MCF 10A (cell line): ENCODE measurements at regions of chr6 and their contacts with region 1.

Region 1: DNA sequence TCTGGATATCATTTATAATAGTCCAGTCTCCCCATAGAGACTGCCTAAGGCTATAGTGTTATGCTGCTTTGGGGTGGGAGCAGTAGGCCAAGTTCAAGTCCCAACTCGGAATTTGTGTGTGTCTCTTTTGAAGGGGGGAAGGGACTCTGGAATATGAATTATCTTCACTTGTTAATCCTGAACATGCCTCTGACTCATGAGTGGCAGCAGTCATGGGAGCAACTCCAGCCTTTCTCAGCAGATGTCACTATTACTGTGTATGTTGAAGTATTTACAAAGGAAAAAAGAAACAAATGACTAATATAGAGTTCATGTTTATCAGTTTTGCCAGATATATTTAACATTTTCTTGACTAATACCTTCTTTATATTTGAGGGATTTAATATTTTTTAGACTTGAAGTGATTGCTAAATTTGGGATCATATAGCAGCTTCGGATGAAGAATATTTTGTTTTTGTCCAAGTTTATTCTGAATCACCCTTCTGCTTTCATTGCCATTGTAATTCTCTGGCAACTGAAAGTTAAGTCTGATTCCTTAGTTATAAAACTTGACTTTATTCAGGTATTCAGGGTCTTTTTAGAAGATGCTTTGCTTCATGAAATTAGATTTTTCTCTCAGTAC is 23.4 kb downstream of the FAM217A start:
- DNase-seq: peak; percentile 80
- H3K4me3 Mint-ChIP-seq: no peak overlapping the region
- H3K27ac Mint-ChIP-seq: peak overlapping the region; percentile 44
- H3K4me1 Mint-ChIP-seq: peaks cover 26% of the 10 kb centered on the region
- H3K27me3 Mint-ChIP-seq: no peaks in the 10 kb centered on the region
- CTCF ChIP-seq: peak; percentile 68

Region 2: GRCh38 chr6:4125936-4126864 is 70.7 kb after region 1 on chr6:
- CTCF ChIA-PET with region 1: interaction called, 4 read pairs
- POLR2A ChIA-PET with region 1: interaction called, 4 read pairs
- intact Hi-C with region 1: loop called (anchors 2 kb)
- DNase-seq: peak; percentile 80
- H3K4me3 Mint-ChIP-seq: no peak overlapping the region
- H3K27ac Mint-ChIP-seq: no peak overlapping the region
- H3K4me1 Mint-ChIP-seq: peaks cover 11% of the 10 kb centered on the region
- H3K27me3 Mint-ChIP-seq: no peaks in the 10 kb centered on the region
- CTCF ChIP-seq: peak; percentile 28

Region 3: DNA sequence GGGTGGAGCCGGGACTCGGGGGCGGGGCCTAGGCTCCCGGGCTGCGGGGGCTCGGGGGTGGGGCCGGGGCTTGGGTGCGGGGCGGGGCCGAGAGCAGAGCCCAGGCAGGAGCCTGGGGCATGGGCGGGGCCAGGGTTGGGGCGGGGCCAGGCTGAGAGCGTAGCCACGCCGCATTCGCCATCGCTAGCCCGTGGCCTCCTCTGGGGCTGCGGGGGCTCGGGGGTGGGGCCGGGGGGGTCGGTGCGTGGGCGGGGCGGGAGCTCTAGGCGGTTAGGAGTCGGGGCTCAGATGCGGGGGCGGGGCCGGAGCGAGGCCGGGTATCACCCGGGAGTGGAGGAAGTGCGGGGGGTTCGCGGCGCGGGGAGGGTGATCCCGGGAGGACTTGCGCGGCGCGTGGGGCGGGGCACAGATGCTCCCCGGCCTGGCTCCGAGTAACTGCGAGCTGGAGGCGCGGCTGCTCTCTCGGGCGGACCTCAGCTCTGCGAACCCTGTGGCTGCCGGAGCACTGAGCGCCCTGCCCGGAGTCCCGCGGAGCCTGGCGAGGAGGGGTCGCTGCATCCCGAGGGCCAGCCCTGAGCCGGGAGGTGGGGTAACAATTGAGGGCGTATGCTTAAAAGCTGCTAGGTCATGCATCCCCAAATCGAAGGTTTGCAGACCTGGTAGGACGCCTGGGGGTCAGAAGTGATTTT is 80.3 kb after region 1 on chr6:
- CTCF ChIA-PET with region 1: interaction called, 12 read pairs
- POLR2A ChIA-PET with region 1: interaction called, 18 read pairs
- intact Hi-C with region 1: loop called (anchors 2 kb)
- DNase-seq: peak; percentile 88
- H3K4me3 Mint-ChIP-seq: peak overlapping the region; percentile 90
- H3K27ac Mint-ChIP-seq: peak overlapping the region; percentile 35
- H3K4me1 Mint-ChIP-seq: peaks cover 19% of the 10 kb centered on the region
- H3K27me3 Mint-ChIP-seq: no peaks in the 10 kb centered on the region
- CTCF ChIP-seq: no peak

Region 4: DNA sequence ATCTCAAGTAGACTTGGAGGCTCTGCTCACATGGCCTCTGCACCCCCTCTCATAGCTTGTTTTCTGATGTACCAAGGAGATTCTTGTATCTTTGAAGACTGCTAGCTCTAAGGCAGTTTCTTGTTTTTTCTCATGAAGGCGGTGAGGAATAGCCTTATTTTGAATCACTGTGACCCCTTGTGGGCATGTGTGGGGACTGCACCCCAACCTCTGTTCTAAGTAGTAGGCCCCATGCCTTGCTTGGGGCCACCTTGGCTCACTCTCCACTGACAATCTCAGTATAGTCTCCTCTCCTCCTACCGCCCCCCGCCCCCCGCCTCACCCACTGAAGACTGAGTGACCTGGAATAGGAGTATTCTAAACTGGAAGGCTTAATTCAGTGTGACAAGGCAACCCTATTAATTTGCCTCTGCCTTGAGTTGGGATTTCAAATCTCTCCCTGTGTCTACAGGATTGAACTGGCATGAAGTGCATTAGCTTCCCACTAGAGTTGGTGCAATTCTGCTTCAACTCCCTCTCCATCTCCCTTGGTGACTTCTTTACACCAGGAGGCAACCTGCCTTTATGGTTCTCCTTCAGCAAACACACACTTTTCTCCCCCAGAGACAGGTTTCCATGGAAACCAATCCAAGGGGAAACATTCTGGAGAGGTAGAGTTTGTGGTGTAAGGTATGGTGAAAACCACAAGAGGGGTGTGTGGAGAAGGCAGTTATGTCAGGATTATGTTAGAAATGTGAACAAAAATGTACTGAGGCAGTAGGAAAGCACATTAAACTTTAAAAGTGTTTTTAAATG is 155.3 kb after region 1 on chr6:
- CTCF ChIA-PET with region 1: interaction called, 51 read pairs
- POLR2A ChIA-PET with region 1: interaction called, 4 read pairs
- intact Hi-C with region 1: loop called (anchors 1 kb)
- DNase-seq: peak; percentile 70
- H3K4me3 Mint-ChIP-seq: no peak overlapping the region
- H3K27ac Mint-ChIP-seq: no peak overlapping the region
- H3K4me1 Mint-ChIP-seq: no peaks in the 10 kb centered on the region
- H3K27me3 Mint-ChIP-seq: peaks cover 11% of the 10 kb centered on the region
- CTCF ChIP-seq: peak; percentile 63